ENCODE measurements at regions of chr18 and their contacts with region 1.

Region 1: GRCh38 chr18:32470713-32471633 is at the start of gene GAREM1:
- DNase-seq: peak; percentile 99
- H3K4me3 Mint-ChIP-seq: peak within 1 kb of the TSS; percentile 77
- H3K27ac Mint-ChIP-seq: peak within 1 kb of the TSS; percentile 35
- H3K4me1 Mint-ChIP-seq: peaks cover 22% of the 10 kb centered on the region
- H3K27me3 Mint-ChIP-seq: no peaks in the 10 kb centered on the region
- CTCF ChIP-seq: peak; percentile 81
- total RNA-seq, gene GAREM1: 21.4 and 24.0 TPM in 2 replicates

Region 2: GRCh38 chr18:31892936-31893335 is 578.0 kb before region 1 on chr18:
- CTCF ChIA-PET with region 1: no interaction called
- POLR2A ChIA-PET with region 1: no interaction called
- intact Hi-C with region 1: no loop called
- DNase-seq: no peak
- H3K4me3 Mint-ChIP-seq: no peak overlapping the region
- H3K27ac Mint-ChIP-seq: no peak overlapping the region
- H3K4me1 Mint-ChIP-seq: no peaks in the 10 kb centered on the region
- H3K27me3 Mint-ChIP-seq: no peaks in the 10 kb centered on the region
- CTCF ChIP-seq: no peak

Region 3: GRCh38 chr18:32284284-32284683 is 186.7 kb before region 1 on chr18:
- CTCF ChIA-PET with region 1: interaction called, 86 read pairs
- POLR2A ChIA-PET with region 1: interaction called, 47 read pairs
- intact Hi-C with region 1: loop called (anchors 1 kb)
- DNase-seq: no peak
- H3K4me3 Mint-ChIP-seq: no peak overlapping the region
- H3K27ac Mint-ChIP-seq: no peak overlapping the region
- H3K4me1 Mint-ChIP-seq: peaks cover 17% of the 10 kb centered on the region
- H3K27me3 Mint-ChIP-seq: no peaks in the 10 kb centered on the region
- CTCF ChIP-seq: no peak

Region 4: GRCh38 chr18:32317651-32318050 is 153.3 kb before region 1 on chr18:
- CTCF ChIA-PET with region 1: interaction called, 6 read pairs
- POLR2A ChIA-PET with region 1: interaction called, 27 read pairs
- intact Hi-C with region 1: no loop called
- DNase-seq: peak; percentile 16
- H3K4me3 Mint-ChIP-seq: peak overlapping the region; percentile 8
- H3K27ac Mint-ChIP-seq: peak overlapping the region; percentile 68
- H3K4me1 Mint-ChIP-seq: peaks cover 13% of the 10 kb centered on the region
- H3K27me3 Mint-ChIP-seq: no peaks in the 10 kb centered on the region
- CTCF ChIP-seq: no peak

Region 5: GRCh38 chr18:32366586-32367538 is 104.1 kb before region 1 on chr18:
- CTCF ChIA-PET with region 1: interaction called, 38 read pairs
- POLR2A ChIA-PET with region 1: interaction called, 84 read pairs
- intact Hi-C with region 1: no loop called
- DNase-seq: peak; percentile 61
- H3K4me3 Mint-ChIP-seq: no peak overlapping the region
- H3K27ac Mint-ChIP-seq: peak overlapping the region; percentile 40
- H3K4me1 Mint-ChIP-seq: peaks cover 59% of the 10 kb centered on the region
- H3K27me3 Mint-ChIP-seq: no peaks in the 10 kb centered on the region
- CTCF ChIP-seq: no peak

Region 6: DNA sequence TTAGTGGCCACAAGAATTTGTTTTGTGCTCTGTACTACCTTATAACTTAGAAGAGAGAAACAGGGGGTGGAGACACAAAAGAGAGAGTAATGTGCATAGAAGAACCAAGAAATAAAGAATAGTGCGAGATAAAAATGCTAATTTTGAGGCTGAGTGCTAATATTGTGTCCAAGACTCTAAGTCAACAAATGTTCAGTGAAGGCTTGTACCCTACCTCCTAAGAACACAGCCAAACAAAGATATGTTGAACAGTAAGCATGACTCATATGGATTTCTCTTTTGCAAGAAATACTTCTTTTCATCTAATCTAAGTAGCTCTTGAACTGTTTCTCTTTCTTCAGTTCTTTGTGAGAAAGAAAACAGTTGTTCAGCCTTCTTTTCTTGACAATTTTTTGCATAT is 45.5 kb before region 1 on chr18:
- CTCF ChIA-PET with region 1: interaction called, 10 read pairs
- POLR2A ChIA-PET with region 1: interaction called, 18 read pairs
- intact Hi-C with region 1: no loop called
- DNase-seq: peak; percentile 62
- H3K4me3 Mint-ChIP-seq: peak overlapping the region; percentile 13
- H3K27ac Mint-ChIP-seq: peak overlapping the region; percentile 82
- H3K4me1 Mint-ChIP-seq: peaks cover 26% of the 10 kb centered on the region
- H3K27me3 Mint-ChIP-seq: no peaks in the 10 kb centered on the region
- CTCF ChIP-seq: no peak

Region 7: DNA sequence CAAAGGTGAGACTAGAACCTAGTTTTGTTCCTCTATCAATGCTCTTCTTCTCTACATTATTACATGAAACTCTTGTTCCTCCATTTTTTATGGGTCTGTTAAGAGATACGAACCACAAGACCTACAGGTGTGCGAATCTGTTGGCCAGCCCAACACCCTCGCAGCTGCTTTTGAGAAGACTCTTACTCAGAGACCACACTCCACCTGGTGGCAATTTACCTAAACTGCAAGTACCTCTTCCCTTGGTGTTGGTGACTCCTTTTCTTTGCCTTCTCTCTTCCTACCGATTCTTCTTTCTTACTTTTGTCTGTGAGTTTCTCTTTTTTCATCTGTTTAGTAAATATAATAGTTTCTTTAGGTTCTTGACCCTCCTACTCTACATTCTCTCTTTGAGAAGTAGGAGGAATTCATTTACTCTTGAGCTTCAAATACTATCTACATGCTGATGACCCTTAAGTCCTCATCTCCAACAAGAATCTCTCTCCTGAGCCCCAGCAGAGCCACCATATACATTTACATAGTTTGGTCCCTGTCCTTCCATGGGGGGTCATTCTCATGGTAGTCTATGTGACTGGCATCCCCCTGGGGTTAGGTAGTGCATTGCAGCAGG is 81.6 kb after region 1 on chr18:
- CTCF ChIA-PET with region 1: interaction called, 186 read pairs
- POLR2A ChIA-PET with region 1: interaction called, 14 read pairs
- intact Hi-C with region 1: loop called (anchors 1 kb)
- DNase-seq: peak; percentile 81
- H3K4me3 Mint-ChIP-seq: no peak overlapping the region
- H3K27ac Mint-ChIP-seq: no peak overlapping the region
- H3K4me1 Mint-ChIP-seq: peaks cover 6% of the 10 kb centered on the region
- H3K27me3 Mint-ChIP-seq: no peaks in the 10 kb centered on the region
- CTCF ChIP-seq: peak; percentile 57

Region 8: GRCh38 chr18:32624275-32624674 is 153.3 kb after region 1 on chr18:
- CTCF ChIA-PET with region 1: no interaction called
- POLR2A ChIA-PET with region 1: no interaction called
- intact Hi-C with region 1: no loop called
- DNase-seq: peak; percentile 2
- H3K4me3 Mint-ChIP-seq: no peak overlapping the region
- H3K27ac Mint-ChIP-seq: no peak overlapping the region
- H3K4me1 Mint-ChIP-seq: no peaks in the 10 kb centered on the region
- H3K27me3 Mint-ChIP-seq: peaks cover 29% of the 10 kb centered on the region
- CTCF ChIP-seq: no peak